ENCODE measurements at regions of chr14 and their contacts with region 1.

Region 1: GRCh38 chr14:45253068-45253753 is at the start of gene MIS18BP1:
- DNase-seq: peak; percentile 81
- ATAC-seq: peak; percentile 85
- H3K4me3 ChIP-seq: peak within 1 kb of the TSS; percentile 98
- H3K27ac ChIP-seq: peak within 1 kb of the TSS; percentile 85
- H3K4me1 ChIP-seq: peaks cover 8% of the 10 kb centered on the region
- H3K27me3 ChIP-seq: no peaks in the 10 kb centered on the region
- CTCF ChIP-seq: peak; percentile 80 to 95 (median 90)
- EP300 ChIP-seq: peak in 1 of 2 experiments; percentile 62; a peak in 1 of 4 replicates
- POLR2A ChIP-seq: peak; percentile 82
- RAD21 ChIP-seq: peak; percentile 49
- polyA plus RNA-seq, gene MIS18BP1: 16.9 to 17.7 TPM

Region 2: GRCh38 chr14:45083971-45084722 is 169.1 kb before region 1 on chr14 and contains the start of gene PRPF39:
- CTCF ChIA-PET with region 1: interaction called, 3 read pairs
- POLR2A ChIA-PET with region 1: interaction called, 3 read pairs
- RAD21 ChIA-PET with region 1: interaction called, 3 read pairs
- SMC1A ChIA-PET with region 1: no interaction called
- in situ Hi-C with region 1: no loop called
- intact Hi-C with region 1: loop called (anchors 2 kb)
- DNase-seq: peak; percentile 84
- ATAC-seq: peak; percentile 92
- H3K4me3 ChIP-seq: peak within 1 kb of the TSS; percentile 99
- H3K27ac ChIP-seq: peak within 1 kb of the TSS; percentile 88
- H3K4me1 ChIP-seq: peaks cover 11% of the 10 kb centered on the region
- H3K27me3 ChIP-seq: no peaks in the 10 kb centered on the region
- CTCF ChIP-seq: no peak
- EP300 ChIP-seq: no peak
- POLR2A ChIP-seq: peak; percentile 99
- RAD21 ChIP-seq: no peak
- polyA plus RNA-seq, gene PRPF39: 22.1 to 22.3 TPM